CD4-positive, alpha-beta memory T cell (primary cell): ENCODE measurements at regions of chr4 and their contacts with region 1.

Region 1: DNA sequence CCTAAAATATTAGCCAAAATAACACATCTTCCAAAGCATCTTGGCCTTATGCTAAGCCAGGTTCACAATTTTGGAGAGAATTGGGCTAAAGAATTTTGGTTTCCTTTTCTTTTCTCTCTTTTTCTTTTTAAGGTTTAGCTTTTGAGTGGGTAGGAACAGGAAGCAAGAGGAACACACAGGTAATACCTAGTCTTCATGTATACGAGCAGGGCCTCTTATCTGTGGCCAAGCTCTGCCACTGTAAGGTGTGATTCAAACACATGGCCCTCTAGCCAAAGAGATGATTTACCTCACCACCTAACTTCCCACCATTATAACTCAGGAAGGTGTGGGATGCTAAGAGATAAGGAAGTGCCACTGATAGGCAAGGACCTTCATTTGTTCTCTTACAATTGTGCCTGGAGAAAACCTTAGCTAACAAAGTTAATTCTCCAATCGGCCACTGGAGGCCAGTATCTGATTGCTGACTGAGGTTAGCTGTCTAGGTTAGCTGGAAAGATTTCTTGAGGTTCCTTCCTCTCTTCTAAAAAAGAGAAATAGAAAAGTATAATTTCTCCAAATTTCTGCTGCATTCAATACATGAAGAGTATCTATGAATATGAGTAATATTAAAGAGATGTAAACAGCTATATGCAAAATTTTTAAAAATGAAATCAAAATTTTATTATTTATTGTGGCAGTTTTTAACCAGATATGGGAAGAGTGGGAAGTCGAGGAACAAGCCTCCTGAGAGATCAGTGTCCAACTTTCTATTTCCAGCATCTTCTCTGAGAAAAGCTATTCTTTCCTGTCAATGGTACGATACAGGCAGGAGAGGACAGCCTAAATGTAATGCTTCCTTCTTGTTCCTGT is 30.1 kb upstream of the BBS7 start:
- DNase-seq: peak; percentile 44 to 57 (median 49)
- H3K4me3 ChIP-seq: no peak overlapping the region
- H3K4me3 Mint-ChIP-seq: no peak overlapping the region
- H3K27ac ChIP-seq: no peak overlapping the region
- H3K27ac Mint-ChIP-seq: no peak overlapping the region
- H3K4me1 ChIP-seq: no peaks in the 10 kb centered on the region
- H3K4me1 Mint-ChIP-seq: peaks cover 0 to 8% (median 4%) of the 10 kb centered on the region in 4 donors
- H3K27me3 ChIP-seq: no peaks in the 10 kb centered on the region
- H3K27me3 Mint-ChIP-seq: peaks cover 2 to 7% of the 10 kb centered on the region in 2 donors

Region 2: DNA sequence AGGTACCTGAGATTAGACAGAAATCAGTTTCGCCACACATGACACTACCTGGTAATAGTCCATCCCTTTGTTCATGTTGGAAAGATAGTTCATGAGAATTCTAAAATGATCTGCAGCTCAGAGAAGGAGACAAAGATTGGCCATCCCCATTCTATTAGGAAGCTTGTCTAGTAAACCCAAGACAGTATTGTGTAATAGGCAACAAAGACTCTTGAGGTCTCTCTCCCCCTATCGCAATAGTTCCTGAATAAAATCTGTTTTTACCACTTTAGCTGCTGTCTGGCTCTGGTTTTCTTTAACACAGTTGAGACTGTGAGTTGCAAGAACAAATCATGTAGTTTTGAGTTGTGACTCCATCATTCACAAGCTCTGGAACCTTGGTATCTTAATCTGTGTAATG is 15.2 kb before region 1 on chr4:
- CTCF ChIA-PET with region 1: interaction called, 13 read pairs
- POLR2A ChIA-PET with region 1: no interaction called
- intact Hi-C with region 1: no loop called
- DNase-seq: no peak
- H3K4me3 ChIP-seq: no peak overlapping the region
- H3K4me3 Mint-ChIP-seq: no peak overlapping the region
- H3K27ac ChIP-seq: no peak overlapping the region
- H3K27ac Mint-ChIP-seq: no peak overlapping the region
- H3K4me1 ChIP-seq: no peaks in the 10 kb centered on the region
- H3K4me1 Mint-ChIP-seq: no peaks in the 10 kb centered on the region
- H3K27me3 ChIP-seq: peaks cover 2% of the 10 kb centered on the region
- H3K27me3 Mint-ChIP-seq: peaks cover 13 to 22% of the 10 kb centered on the region in 2 donors

Region 3: DNA sequence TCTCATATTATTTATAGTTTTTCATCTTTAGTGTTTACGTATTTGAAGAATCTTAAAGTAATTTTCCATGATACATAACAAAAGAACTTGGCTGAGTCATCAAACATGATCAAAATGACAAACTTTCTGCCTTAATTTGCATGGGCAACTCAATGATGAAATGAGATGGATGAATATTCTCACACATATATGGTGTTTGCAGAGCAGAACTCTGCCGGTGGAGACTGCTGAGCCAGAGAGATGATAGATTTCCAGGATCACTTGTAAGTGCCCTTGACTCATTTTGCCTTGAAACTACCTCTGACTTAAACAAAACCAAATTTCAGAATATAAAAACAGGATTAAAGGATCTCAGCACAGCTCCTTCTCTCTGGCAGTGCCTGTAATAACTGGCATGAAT is 13.3 kb after region 1 on chr4:
- CTCF ChIA-PET with region 1: interaction called, 10 read pairs
- POLR2A ChIA-PET with region 1: no interaction called
- intact Hi-C with region 1: no loop called
- DNase-seq: no peak
- H3K4me3 ChIP-seq: no peak overlapping the region
- H3K4me3 Mint-ChIP-seq: no peak overlapping the region
- H3K27ac ChIP-seq: no peak overlapping the region
- H3K27ac Mint-ChIP-seq: no peak overlapping the region
- H3K4me1 ChIP-seq: no peaks in the 10 kb centered on the region
- H3K4me1 Mint-ChIP-seq: peaks cover 4 to 8% (median 8%) of the 10 kb centered on the region in 4 donors
- H3K27me3 ChIP-seq: no peaks in the 10 kb centered on the region
- H3K27me3 Mint-ChIP-seq: no peaks in the 10 kb centered on the region

Region 4: DNA sequence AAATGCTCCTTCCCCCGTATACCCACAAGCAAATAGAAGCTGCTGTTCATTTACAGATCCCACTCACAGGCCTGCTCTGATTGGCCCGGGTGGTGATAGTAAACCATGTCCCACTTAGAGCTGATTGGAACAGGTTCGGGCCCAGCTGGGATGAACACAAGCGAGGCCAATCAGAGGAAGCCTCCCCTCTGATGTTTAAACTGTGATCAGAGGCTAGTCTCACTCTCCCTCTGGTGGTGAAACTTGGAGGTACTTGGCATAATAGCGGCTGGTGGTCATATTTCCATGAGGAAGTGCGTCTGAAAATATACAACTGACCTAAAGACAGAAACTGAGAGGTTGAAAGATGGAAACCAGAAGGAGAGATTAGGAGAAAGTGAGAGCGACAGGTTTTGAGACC is 103.0 kb after region 1 on chr4:
- CTCF ChIA-PET with region 1: interaction called, 16 read pairs
- POLR2A ChIA-PET with region 1: no interaction called
- intact Hi-C with region 1: no loop called
- DNase-seq: peak in 4 of 5 donors; percentile 3 to 33 (median 16)
- H3K4me3 ChIP-seq: no peak overlapping the region
- H3K4me3 Mint-ChIP-seq: no peak overlapping the region
- H3K27ac ChIP-seq: no peak overlapping the region
- H3K27ac Mint-ChIP-seq: no peak overlapping the region
- H3K4me1 ChIP-seq: no peaks in the 10 kb centered on the region
- H3K4me1 Mint-ChIP-seq: peaks cover 0 to 4% (median 0%) of the 10 kb centered on the region in 4 donors
- H3K27me3 ChIP-seq: no peaks in the 10 kb centered on the region
- H3K27me3 Mint-ChIP-seq: peaks cover 8 to 9% of the 10 kb centered on the region in 2 donors

Region 5: GRCh38 chr4:122652379-122652778 is 752.0 kb after region 1 on chr4:
- CTCF ChIA-PET with region 1: no interaction called
- POLR2A ChIA-PET with region 1: no interaction called
- intact Hi-C with region 1: loop called (anchors 5 kb)
- DNase-seq: peak; percentile 40 to 52 (median 47)
- H3K4me3 ChIP-seq: no peak overlapping the region
- H3K4me3 Mint-ChIP-seq: no peak overlapping the region
- H3K27ac ChIP-seq: no peak overlapping the region
- H3K27ac Mint-ChIP-seq: no peak overlapping the region
- H3K4me1 ChIP-seq: no peaks in the 10 kb centered on the region
- H3K4me1 Mint-ChIP-seq: no peaks in the 10 kb centered on the region
- H3K27me3 ChIP-seq: no peaks in the 10 kb centered on the region
- H3K27me3 Mint-ChIP-seq: no peaks in the 10 kb centered on the region